ENCODE measurements at regions of chr7 and their contacts with region 1.

Region 1: GRCh38 chr7:88346357-88346756 is 39.7 kb upstream of the STEAP4 start:
- DNase-seq: no peak
- H3K4me3 ChIP-seq: no peak overlapping the region
- H3K27ac ChIP-seq: no peak overlapping the region
- H3K27me3 ChIP-seq: no peaks in the 10 kb centered on the region
- CTCF ChIP-seq: no peak

Region 2: DNA sequence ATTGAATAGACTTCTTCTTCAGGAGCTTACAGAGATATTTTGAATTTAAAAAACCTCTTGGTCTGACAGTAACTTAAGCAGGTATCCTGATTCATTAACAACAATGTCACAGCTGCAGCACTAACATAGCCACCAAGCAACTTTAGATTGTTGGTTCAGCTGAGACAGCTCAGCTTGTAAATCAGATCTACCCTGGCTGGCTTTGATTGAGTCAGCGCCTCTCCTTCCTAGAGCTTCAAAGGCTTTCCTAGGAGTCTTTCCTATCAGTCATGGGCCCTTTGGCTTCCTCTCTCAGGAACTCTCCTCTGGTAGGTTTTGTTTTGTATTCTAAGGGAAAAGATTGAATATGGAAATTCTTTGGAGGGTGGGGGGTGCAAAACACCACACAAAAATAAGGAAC is 31.1 kb after region 1 on chr7:
- intact Hi-C with region 1: loop called in 1 of 2 experiments (anchors 1 kb)
- DNase-seq: no peak
- H3K4me3 ChIP-seq: no peak overlapping the region
- H3K27ac ChIP-seq: no peak overlapping the region
- H3K27me3 ChIP-seq: no peaks in the 10 kb centered on the region
- CTCF ChIP-seq: no peak

Region 3: DNA sequence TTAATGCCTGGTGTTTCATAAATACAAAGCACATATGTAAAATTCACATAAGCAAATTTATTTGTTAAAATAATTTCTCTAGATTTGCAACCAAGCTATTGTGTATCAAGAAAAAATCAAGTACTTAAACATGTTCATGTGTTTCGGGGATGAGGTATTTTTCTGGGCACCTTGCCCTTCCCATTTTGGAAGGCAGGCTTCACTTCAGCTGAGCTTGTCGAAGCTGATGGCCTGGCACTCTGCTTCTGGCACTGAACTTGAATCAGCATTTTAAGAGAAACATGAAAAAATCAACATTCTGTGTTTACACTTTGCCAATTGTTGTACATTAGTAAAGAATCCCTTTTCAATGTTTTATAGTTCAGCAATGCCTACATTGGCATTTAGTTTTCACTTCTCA is 139.5 kb after region 1 on chr7:
- intact Hi-C with region 1: no loop called
- DNase-seq: no peak
- H3K4me3 ChIP-seq: no peak overlapping the region
- H3K27ac ChIP-seq: no peak overlapping the region
- H3K27me3 ChIP-seq: no peaks in the 10 kb centered on the region
- CTCF ChIP-seq: no peak

Region 4: DNA sequence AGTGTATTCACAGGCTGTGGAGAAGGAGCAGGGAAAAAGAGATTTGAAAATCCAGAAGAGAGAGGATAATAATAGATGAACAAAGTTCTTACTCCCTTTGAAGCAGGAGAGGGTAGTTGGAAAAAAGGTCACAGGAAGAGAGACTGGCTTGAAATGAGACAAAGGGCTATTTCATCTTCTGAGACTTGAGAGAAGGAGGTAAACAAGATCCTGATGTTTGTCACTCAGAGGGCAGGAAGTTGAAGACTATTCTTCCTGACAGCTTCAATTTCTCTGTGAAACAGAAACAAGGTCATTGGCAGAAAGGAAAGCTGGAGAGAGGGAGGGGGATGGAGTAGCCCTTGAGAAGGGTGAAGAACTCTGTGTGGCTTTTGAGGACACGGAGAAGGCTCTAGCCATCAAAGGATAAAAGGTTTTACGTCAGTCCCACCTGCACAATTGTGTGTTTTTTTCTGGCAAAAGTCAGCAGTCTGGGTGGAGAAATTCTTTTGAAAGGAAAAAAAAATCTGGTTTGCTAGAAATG is 176.5 kb after region 1 on chr7:
- intact Hi-C with region 1: no loop called
- DNase-seq: no peak
- H3K4me3 ChIP-seq: no peak overlapping the region
- H3K27ac ChIP-seq: peak overlapping the region in 23 of 59 donors; percentile 1 to 67 (median 32)
- H3K27me3 ChIP-seq: no peaks in the 10 kb centered on the region
- CTCF ChIP-seq: no peak